ENCODE measurements at regions of chr13 and their contacts with region 1.

Region 1: GRCh38 chr13:93794197-93794885 is 567.7 kb downstream of the GPC6 start:
- DNase-seq: peak; percentile 75
- H3K4me3 Mint-ChIP-seq: no peak overlapping the region
- H3K27ac Mint-ChIP-seq: no peak overlapping the region
- H3K4me1 Mint-ChIP-seq: peaks cover 8% of the 10 kb centered on the region
- H3K27me3 Mint-ChIP-seq: peaks cover 34% of the 10 kb centered on the region

Region 2: GRCh38 chr13:93151277-93151676 is 643.1 kb before region 1 on chr13:
- CTCF ChIA-PET with region 1: no interaction called
- intact Hi-C with region 1: loop called (anchors 2 kb)
- DNase-seq: no peak
- H3K4me3 Mint-ChIP-seq: no peak overlapping the region
- H3K27ac Mint-ChIP-seq: no peak overlapping the region
- H3K4me1 Mint-ChIP-seq: no peaks in the 10 kb centered on the region
- H3K27me3 Mint-ChIP-seq: peaks cover 3% of the 10 kb centered on the region